ENCODE measurements at regions of chr12 and their contacts with region 1.

Region 1: DNA sequence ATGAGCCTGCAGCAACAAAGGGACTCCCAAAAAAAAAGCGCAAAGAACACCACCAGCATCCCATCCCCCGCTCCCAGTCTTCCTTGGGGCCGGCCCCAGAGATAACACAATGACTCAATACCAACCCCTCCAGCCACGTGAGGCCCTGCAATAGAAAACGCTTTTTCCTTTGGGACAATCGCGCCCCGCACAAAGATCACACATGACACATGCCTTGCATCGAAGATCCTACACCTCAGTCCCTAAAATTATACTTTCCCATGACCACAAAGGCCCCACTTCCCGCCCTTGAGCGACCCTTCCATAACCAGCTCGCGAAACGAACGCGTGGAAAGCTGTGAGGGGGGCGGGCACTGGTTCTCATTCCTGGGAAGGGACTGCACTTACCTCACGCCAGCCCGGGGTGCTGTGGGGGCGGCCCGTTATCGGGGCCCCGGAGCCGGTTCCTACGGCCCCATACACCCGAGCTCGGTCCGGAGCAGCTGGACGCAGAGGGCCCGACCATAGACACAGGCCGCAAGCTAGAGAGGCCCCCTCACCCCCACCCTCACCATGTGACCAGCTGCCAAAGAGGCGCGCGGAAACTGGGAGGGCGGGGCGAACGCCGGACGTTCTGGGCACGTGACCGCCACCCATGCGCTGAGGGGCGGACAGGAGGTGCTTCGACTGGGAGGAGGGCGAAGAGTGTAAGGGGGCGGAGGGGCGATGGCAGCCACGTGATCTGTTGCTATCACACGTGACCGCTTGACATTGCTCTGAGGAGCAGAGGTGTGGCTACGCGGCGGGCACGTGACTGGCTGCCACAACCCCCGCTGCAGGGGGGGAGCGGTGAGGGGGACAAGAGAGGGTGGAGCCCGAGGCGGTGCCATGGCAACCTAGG is at the start of gene CDK4:
- DNase-seq: peak; percentile 92 to 100 (median 99)
- ATAC-seq: peak; percentile 89
- H3K4me3 ChIP-seq: peak within 1 kb of the TSS; percentile 79
- H3K4me3 Mint-ChIP-seq: peak within 1 kb of the TSS; percentile 82 to 98 (median 92)
- H3K27ac ChIP-seq: peak within 1 kb of the TSS; percentile 90
- H3K27ac Mint-ChIP-seq: peak within 1 kb of the TSS; percentile 86 to 99 (median 93)
- H3K4me1 ChIP-seq: peaks cover 32 to 42% of the 10 kb centered on the region in 2 donors
- H3K4me1 Mint-ChIP-seq: peaks cover 35 to 62% (median 59%) of the 10 kb centered on the region in 7 donors
- H3K27me3 ChIP-seq: no peaks in the 10 kb centered on the region
- H3K27me3 Mint-ChIP-seq: peaks cover 0 to 2% (median 0%) of the 10 kb centered on the region in 5 donors
- total RNA-seq, gene CDK4: 23.8 to 108 (median 42.9) TPM

Region 2: GRCh38 chr12:56724972-56725722 is 1026.9 kb before region 1 on chr12 and contains the start of gene NACA:
- CTCF ChIA-PET with region 1: no interaction called
- POLR2A ChIA-PET with region 1: no interaction called
- intact Hi-C with region 1: loop called in 1 of 2 experiments (anchors 2 kb)
- DNase-seq: peak; percentile 85 to 99 (median 96)
- ATAC-seq: peak; percentile 95
- H3K4me3 ChIP-seq: peak within 1 kb of the TSS; percentile 100
- H3K4me3 Mint-ChIP-seq: peak within 1 kb of the TSS; percentile 94 to 100 (median 97)
- H3K27ac ChIP-seq: peak within 1 kb of the TSS; percentile 87
- H3K27ac Mint-ChIP-seq: peak within 1 kb of the TSS; percentile 94 to 100 (median 98)
- H3K4me1 ChIP-seq: peaks cover 40 to 43% of the 10 kb centered on the region in 2 donors
- H3K4me1 Mint-ChIP-seq: peaks cover 39 to 53% (median 49%) of the 10 kb centered on the region in 7 donors
- H3K27me3 ChIP-seq: no peaks in the 10 kb centered on the region
- H3K27me3 Mint-ChIP-seq: no peaks in the 10 kb centered on the region
- total RNA-seq, gene NACA: 834 to 1,486 (median 1,355) TPM

Region 3: DNA sequence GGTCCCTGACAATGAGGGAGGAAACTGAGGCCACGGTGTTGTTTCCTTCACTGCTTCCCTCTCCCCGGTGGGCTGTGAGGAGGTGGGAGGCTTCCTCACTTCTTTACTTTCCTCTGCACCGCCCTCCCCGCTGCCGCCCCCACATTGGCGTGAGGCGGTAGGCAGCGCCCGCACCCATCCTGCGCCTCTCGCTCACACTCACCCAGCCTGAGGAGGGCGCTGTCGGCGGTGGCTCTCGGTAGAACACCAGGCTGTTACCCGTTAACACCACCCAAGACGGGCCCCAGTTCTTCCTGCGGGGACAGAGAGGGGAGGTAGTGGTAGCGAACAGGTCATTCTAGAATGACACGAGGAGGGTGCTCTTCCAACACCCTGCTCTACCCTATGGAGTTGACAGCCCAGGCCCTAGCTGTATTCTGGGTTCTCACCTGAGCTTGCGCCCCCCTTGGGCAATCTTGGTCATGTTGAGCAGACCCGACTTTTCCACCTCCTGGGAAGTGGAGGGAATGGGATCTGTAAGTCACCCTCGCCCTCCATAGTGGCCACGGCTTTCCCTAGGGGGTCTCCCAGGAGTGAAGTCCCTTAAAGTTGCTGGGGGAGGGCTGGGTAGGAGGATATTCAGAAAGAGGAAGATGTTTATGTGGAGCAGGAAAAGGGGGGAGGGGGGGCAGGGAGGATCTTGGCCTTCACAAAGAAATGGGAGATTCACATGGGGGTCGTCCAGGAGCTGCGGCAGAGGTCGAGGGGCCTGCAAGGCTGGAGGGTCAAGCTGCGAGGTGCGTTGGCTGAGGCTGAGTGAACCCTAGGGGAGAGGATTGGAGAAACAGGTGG is 275.7 kb before region 1 on chr12:
- CTCF ChIA-PET with region 1: no interaction called
- POLR2A ChIA-PET with region 1: no interaction called
- intact Hi-C with region 1: loop called in 1 of 2 experiments (anchors 5 kb)
- DNase-seq: peak; percentile 58 to 85 (median 70)
- ATAC-seq: peak; percentile 53
- H3K4me3 ChIP-seq: peak overlapping the region; percentile 95
- H3K4me3 Mint-ChIP-seq: peak overlapping the region; percentile 84 to 100 (median 98)
- H3K27ac ChIP-seq: peak overlapping the region; percentile 94
- H3K27ac Mint-ChIP-seq: peak overlapping the region; percentile 97 to 100 (median 100)
- H3K4me1 ChIP-seq: peaks cover 59 to 70% of the 10 kb centered on the region in 2 donors
- H3K4me1 Mint-ChIP-seq: peaks cover 66 to 85% (median 76%) of the 10 kb centered on the region in 7 donors
- H3K27me3 ChIP-seq: no peaks in the 10 kb centered on the region
- H3K27me3 Mint-ChIP-seq: no peaks in the 10 kb centered on the region

Region 4: GRCh38 chr12:57693659-57694458 is 58.2 kb before region 1 on chr12 and contains the start of gene OS9:
- CTCF ChIA-PET with region 1: no interaction called
- POLR2A ChIA-PET with region 1: interaction called, 4 read pairs
- intact Hi-C with region 1: loop called in 1 of 2 experiments (anchors 1 kb)
- DNase-seq: peak; percentile 76 to 99 (median 98)
- ATAC-seq: peak; percentile 96
- H3K4me3 ChIP-seq: peak within 1 kb of the TSS; percentile 92
- H3K4me3 Mint-ChIP-seq: no peak within 1 kb of the TSS
- H3K27ac ChIP-seq: peak within 1 kb of the TSS; percentile 83
- H3K27ac Mint-ChIP-seq: no peak within 1 kb of the TSS
- H3K4me1 ChIP-seq: peaks cover 10 to 23% of the 10 kb centered on the region in 2 donors
- H3K4me1 Mint-ChIP-seq: peaks cover 2 to 14% (median 7%) of the 10 kb centered on the region in 7 donors
- H3K27me3 ChIP-seq: no peaks in the 10 kb centered on the region
- H3K27me3 Mint-ChIP-seq: peaks cover 0 to 18% (median 7%) of the 10 kb centered on the region in 5 donors
- total RNA-seq, gene OS9: 139 to 175 (median 171) TPM

Region 5: DNA sequence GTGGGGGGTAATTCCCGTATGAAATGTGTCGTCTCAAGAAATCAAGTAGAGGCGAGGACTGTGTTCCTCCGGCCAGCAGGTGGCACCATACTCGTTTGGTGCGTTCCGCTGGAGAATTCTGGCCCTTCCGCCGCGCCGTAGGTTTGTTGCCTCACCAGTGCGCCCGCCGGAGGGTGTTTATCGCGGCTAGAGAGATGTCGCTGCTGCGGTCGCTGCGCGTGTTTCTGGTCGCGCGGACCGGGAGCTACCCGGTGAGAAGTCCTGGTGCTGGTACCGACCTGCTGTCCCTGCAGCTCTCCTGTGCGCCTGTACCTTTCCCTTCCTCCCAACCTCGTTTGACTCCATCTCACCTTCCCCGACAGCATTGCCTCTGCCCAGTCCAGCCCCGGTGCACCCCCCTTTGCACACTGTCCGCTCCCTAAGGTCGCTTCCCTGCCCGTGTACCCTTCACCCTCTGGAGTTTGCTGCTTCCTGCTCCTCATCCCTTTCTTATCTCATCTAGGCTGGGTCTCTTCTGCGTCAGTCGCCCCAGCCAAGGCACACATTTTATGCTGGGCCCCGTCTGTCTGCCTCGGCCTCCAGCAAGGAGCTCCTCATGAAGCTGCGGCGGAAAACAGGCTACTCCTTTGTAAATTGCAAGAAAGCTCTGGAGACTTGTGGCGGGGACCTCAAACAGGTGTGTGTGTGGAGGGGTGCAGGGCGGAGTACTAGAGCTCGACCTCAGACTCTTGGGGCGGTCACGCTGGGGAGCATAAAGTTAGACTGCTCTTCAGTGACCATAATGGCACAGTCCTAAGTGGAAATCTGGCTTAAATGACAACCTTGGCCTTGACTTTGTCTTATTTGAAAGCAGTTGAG is 30.8 kb after region 1 on chr12 and contains the start of gene TSFM:
- CTCF ChIA-PET with region 1: interaction called, 8 read pairs
- POLR2A ChIA-PET with region 1: interaction called, 5 read pairs
- intact Hi-C with region 1: loop called (anchors 1 kb)
- DNase-seq: peak; percentile 90 to 97 (median 95)
- ATAC-seq: peak; percentile 99
- H3K4me3 ChIP-seq: peak within 1 kb of the TSS; percentile 97
- H3K4me3 Mint-ChIP-seq: peak within 1 kb of the TSS; percentile 96 to 100 (median 99)
- H3K27ac ChIP-seq: peak within 1 kb of the TSS; percentile 85
- H3K27ac Mint-ChIP-seq: peak within 1 kb of the TSS; percentile 95 to 100 (median 99)
- H3K4me1 ChIP-seq: peaks cover 36 to 40% of the 10 kb centered on the region in 2 donors
- H3K4me1 Mint-ChIP-seq: peaks cover 23 to 65% (median 48%) of the 10 kb centered on the region in 7 donors
- H3K27me3 ChIP-seq: no peaks in the 10 kb centered on the region
- H3K27me3 Mint-ChIP-seq: no peaks in the 10 kb centered on the region
- total RNA-seq, gene TSFM: 17.8 to 34.9 (median 22.3) TPM

Region 6: GRCh38 chr12:57899010-57899662 is 147.1 kb after region 1 on chr12:
- CTCF ChIA-PET with region 1: interaction called, 13 read pairs
- POLR2A ChIA-PET with region 1: interaction called, 5 read pairs
- intact Hi-C with region 1: loop called in 1 of 2 experiments (anchors 1 kb)
- DNase-seq: peak; percentile 41 to 79 (median 53)
- ATAC-seq: peak; percentile 91
- H3K4me3 ChIP-seq: no peak overlapping the region
- H3K4me3 Mint-ChIP-seq: peak overlapping the region; percentile 53 to 88 (median 82)
- H3K27ac ChIP-seq: peak overlapping the region; percentile 66
- H3K27ac Mint-ChIP-seq: peak overlapping the region; percentile 86 to 98 (median 96)
- H3K4me1 ChIP-seq: peaks cover 34 to 49% of the 10 kb centered on the region in 2 donors
- H3K4me1 Mint-ChIP-seq: peaks cover 29 to 60% (median 55%) of the 10 kb centered on the region in 7 donors
- H3K27me3 ChIP-seq: no peaks in the 10 kb centered on the region
- H3K27me3 Mint-ChIP-seq: peaks cover 0 to 2% (median 0%) of the 10 kb centered on the region in 5 donors

Region 7: DNA sequence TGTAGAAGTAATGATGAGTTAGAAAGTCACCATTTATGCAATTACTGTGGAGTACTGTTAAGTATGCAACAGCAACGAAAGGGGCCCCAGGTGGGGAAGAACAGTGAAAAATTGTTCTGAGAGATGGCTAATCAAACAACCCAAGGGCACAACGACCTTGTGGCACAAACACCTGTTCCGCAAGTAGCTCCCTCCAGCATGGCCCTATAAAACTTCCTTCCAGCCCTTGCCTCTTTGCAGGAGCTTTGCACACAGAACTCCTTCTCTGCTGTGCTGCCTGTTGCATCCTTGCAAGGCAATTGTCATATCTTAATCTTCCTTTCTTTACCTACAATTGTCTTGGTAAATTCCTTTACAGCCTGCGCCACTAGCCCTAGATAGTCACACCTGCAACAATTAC is 166.1 kb after region 1 on chr12:
- CTCF ChIA-PET with region 1: no interaction called
- POLR2A ChIA-PET with region 1: no interaction called
- intact Hi-C with region 1: no loop called
- DNase-seq: no peak
- ATAC-seq: no peak
- H3K4me3 ChIP-seq: no peak overlapping the region
- H3K4me3 Mint-ChIP-seq: no peak overlapping the region
- H3K27ac ChIP-seq: no peak overlapping the region
- H3K27ac Mint-ChIP-seq: peak overlapping the region in 1 of 9 donors; percentile 62
- H3K4me1 ChIP-seq: no peaks in the 10 kb centered on the region
- H3K4me1 Mint-ChIP-seq: no peaks in the 10 kb centered on the region
- H3K27me3 ChIP-seq: no peaks in the 10 kb centered on the region
- H3K27me3 Mint-ChIP-seq: peaks cover 0 to 29% (median 0%) of the 10 kb centered on the region in 5 donors

Region 8: GRCh38 chr12:58131986-58132755 is 380.1 kb after region 1 on chr12:
- CTCF ChIA-PET with region 1: no interaction called
- POLR2A ChIA-PET with region 1: no interaction called
- intact Hi-C with region 1: no loop called
- DNase-seq: no peak
- ATAC-seq: no peak
- H3K4me3 ChIP-seq: no peak overlapping the region
- H3K4me3 Mint-ChIP-seq: no peak overlapping the region
- H3K27ac ChIP-seq: no peak overlapping the region
- H3K27ac Mint-ChIP-seq: no peak overlapping the region
- H3K4me1 ChIP-seq: no peaks in the 10 kb centered on the region
- H3K4me1 Mint-ChIP-seq: no peaks in the 10 kb centered on the region
- H3K27me3 ChIP-seq: no peaks in the 10 kb centered on the region
- H3K27me3 Mint-ChIP-seq: peaks cover 0 to 42% (median 18%) of the 10 kb centered on the region in 5 donors